KBM-7 (cell line): ENCODE measurements at regions of chr16 and their contacts with region 1.

Region 1: GRCh38 chr16:81885976-81886586 is 107.0 kb downstream of the PLCG2 start:
- DNase-seq: peak; percentile 72

Region 2: DNA sequence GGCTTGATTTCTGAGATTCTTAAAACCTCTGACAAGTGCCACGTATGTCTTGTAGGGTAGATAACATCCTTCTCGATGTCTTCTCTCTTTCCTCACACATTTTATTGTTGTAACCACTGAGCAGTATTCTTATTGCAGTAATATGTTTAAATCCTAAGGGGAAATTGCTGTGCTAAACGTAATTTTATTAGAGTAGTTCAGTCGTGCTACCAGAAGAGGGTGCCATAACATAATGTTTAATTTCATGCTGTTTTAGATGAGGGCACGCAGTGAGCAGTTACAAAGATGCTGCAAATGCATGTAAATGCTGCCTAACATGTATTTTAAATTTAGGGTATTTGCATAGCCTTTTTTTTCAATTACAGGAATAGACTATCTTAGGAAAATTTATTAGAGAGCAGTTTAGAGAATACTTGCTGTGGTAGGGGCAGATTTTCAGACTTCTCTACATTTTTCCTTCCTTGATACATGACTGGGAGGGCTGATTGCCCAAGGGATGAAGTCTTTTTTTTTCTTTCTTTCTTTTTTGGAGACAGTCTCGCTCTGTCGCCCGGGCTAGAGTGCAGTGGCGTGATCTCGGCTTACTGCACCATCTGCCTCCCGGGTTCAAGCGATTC is 519.7 kb before region 1 on chr16:
- in situ Hi-C with region 1: loop called (anchors 25 kb)
- DNase-seq: peak; percentile 73